CD8-positive, alpha-beta memory T cell (primary cell): ENCODE measurements at regions of chr10 and their contacts with region 1.

Region 1: DNA sequence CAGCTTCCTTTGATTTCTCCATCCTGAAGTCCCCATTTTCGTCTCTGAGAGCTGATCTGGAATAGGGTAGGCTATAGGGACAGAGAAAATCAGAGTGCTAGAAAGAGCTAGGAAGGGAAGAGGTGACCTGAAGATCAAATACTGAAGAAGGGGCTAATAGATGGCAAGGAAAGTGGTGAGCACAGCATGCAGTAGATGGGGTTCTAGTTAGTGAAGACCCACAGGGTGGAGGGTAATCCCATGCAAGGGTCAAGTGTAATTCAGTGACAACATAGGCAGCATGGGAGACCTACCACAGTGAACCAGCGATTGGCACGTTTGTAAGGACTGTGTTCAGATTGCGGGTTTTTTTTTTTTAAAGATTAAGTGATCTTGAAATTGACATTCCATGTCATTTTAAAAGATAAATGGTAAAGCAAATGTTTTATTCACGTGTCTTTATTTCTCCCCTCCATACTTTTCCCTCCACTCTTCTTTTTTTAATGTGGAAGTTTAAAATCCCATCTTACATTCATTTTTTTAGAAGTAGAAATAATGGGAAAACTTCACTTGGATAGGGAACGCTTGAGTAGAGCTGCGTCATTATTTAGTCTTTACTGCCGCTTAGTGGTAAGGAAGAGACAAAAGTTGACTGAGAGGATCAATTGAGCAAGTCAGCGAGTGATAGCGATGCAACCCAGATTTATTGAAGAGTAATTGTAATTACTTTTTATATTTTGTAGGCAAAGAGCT is 21.0 kb upstream of the ABI1 start:
- DNase-seq: peak in 2 of 5 donors; percentile 30 to 48
- H3K4me3 ChIP-seq: no peak overlapping the region
- H3K4me3 Mint-ChIP-seq: no peak overlapping the region
- H3K27ac ChIP-seq: no peak overlapping the region
- H3K27ac Mint-ChIP-seq: no peak overlapping the region
- H3K4me1 ChIP-seq: no peaks in the 10 kb centered on the region
- H3K4me1 Mint-ChIP-seq: peaks cover 0 to 2% (median 0%) of the 10 kb centered on the region in 3 donors
- H3K27me3 ChIP-seq: no peaks in the 10 kb centered on the region
- H3K27me3 Mint-ChIP-seq: peaks cover 4 to 35% of the 10 kb centered on the region in 2 donors

Region 2: DNA sequence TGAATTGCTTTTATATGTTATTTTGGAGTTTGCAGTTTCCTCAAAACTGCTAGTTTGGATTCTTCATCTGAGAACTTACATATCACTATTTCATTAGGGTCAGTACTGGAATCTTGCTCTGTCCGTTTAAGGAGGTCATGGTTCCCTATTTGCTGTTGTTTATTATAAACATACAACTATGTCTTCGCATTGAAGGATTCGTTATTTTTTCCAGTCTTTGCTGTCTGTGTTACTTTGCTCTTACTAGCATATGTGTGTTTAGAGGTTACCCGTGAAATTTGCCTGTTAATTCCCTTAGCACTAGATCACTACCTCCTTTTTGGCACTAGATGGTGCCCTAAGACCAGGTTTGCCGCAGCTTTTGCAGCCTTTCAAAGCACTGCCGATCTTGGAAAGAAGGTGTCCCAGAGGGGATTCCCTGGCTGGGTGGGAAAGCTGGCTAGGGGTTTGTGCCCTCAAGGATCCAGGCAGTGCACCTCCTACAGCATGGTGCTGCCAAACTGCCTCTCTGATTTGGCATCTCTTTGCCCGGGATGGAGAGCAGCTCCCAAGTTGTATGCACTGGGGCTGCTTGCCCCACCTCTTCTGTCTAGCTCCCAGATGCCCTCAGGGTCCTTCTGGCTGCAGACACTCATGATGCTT is 546.7 kb before region 1 on chr10:
- CTCF ChIA-PET with region 1: interaction called, 10 read pairs
- POLR2A ChIA-PET with region 1: no interaction called
- DNase-seq: peak; percentile 41 to 76 (median 60)
- H3K4me3 ChIP-seq: peak overlapping the region; percentile 62
- H3K4me3 Mint-ChIP-seq: peak overlapping the region; percentile 73 to 87 (median 82)
- H3K27ac ChIP-seq: no peak overlapping the region
- H3K27ac Mint-ChIP-seq: peak overlapping the region in 5 of 8 donors; percentile 7 to 79 (median 62)
- H3K4me1 ChIP-seq: no peaks in the 10 kb centered on the region
- H3K4me1 Mint-ChIP-seq: peaks cover 0 to 9% (median 5%) of the 10 kb centered on the region in 3 donors
- H3K27me3 ChIP-seq: no peaks in the 10 kb centered on the region
- H3K27me3 Mint-ChIP-seq: peaks cover 0 to 3% of the 10 kb centered on the region in 2 donors

Region 3: DNA sequence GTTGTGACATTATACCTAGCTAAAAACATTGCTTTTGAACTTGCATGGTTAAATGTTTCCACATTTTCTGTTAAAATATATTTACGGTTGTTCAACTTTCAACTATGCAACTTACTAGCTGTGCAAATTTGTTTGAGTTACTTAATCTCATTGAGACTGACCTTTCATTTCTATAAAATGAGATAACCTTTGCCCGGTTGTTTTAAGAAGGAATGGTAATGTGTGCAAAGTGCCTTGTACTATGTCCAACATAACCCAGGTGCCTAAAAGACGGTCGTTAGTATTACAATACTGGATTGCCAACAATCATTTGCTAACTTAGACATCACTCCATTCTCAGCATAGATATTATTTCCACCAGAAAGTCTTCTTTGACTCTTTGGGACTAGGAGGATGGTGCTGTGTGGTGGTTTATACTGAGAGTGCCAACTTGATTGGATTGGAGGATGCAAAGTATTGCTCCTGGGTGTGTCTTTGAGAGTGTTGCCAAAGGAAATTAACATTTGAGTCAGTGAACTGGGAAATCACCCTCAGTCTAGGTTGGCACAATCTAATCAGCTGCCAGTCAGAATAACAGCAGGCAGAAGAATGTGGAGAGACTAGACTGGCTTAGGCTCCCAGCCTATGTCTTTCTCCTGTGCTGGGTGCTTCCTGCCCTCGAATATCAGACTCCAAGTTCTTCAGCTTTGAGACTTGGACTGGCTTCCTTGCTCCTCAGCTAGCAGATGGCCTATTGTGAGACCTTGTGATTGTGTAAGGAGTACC is 269.4 kb before region 1 on chr10:
- CTCF ChIA-PET with region 1: interaction called, 10 read pairs
- POLR2A ChIA-PET with region 1: no interaction called
- DNase-seq: no peak
- H3K4me3 ChIP-seq: no peak overlapping the region
- H3K4me3 Mint-ChIP-seq: no peak overlapping the region
- H3K27ac ChIP-seq: no peak overlapping the region
- H3K27ac Mint-ChIP-seq: no peak overlapping the region
- H3K4me1 ChIP-seq: no peaks in the 10 kb centered on the region
- H3K4me1 Mint-ChIP-seq: no peaks in the 10 kb centered on the region
- H3K27me3 ChIP-seq: no peaks in the 10 kb centered on the region
- H3K27me3 Mint-ChIP-seq: peaks cover 4 to 48% of the 10 kb centered on the region in 2 donors

Region 4: GRCh38 chr10:26685441-26685840 is 196.3 kb before region 1 on chr10:
- CTCF ChIA-PET with region 1: interaction called, 11 read pairs
- POLR2A ChIA-PET with region 1: no interaction called
- DNase-seq: no peak
- H3K4me3 ChIP-seq: no peak overlapping the region
- H3K4me3 Mint-ChIP-seq: no peak overlapping the region
- H3K27ac ChIP-seq: no peak overlapping the region
- H3K27ac Mint-ChIP-seq: no peak overlapping the region
- H3K4me1 ChIP-seq: peaks cover 25% of the 10 kb centered on the region
- H3K4me1 Mint-ChIP-seq: peaks cover 18 to 27% (median 25%) of the 10 kb centered on the region in 3 donors
- H3K27me3 ChIP-seq: no peaks in the 10 kb centered on the region
- H3K27me3 Mint-ChIP-seq: peaks cover 7 to 25% of the 10 kb centered on the region in 2 donors

Region 5: DNA sequence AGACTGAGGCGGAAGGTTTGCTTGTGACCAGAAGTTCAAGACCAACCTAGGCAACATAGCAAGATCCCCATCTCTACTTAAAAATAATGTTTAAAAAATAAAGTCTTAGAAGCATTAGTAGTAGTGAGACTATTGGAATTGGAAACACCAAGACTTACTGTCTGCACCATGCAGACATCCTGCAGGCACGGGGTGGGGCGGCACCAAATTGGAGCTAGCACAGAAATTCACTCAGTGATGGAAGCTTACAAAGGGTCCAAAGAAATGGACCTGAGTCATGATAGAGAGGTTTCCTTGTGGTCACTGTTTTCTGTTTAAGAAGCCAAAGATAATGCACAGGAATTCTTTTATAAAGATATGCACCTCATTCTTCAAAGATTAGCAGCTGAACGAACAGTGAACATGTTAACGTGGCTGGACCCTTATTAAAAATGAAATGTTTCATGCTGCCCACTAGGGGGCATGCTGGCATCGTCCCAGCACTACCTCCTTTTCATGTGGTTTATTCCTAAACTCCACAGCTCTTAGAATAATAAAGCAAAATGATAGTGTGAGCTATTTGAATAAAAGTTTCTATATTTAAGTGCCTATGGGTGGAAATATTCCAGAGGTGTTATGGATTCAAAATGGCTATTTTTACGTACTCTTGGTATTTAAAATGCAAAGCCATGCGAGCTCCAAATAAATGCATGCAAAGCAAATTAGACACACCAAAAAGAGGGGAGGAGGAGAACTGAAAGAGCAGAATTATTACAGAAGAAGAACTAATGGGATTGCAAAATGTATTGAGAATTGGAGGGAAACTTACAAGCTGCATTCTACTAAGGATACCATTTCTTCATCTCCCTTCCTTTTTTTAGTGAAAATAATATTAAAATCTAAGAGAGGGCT is 155.7 kb before region 1 on chr10:
- CTCF ChIA-PET with region 1: interaction called, 75 read pairs
- POLR2A ChIA-PET with region 1: interaction called, 4 read pairs
- DNase-seq: peak; percentile 21 to 57 (median 38)
- H3K4me3 ChIP-seq: no peak overlapping the region
- H3K4me3 Mint-ChIP-seq: no peak overlapping the region
- H3K27ac ChIP-seq: no peak overlapping the region
- H3K27ac Mint-ChIP-seq: peak overlapping the region in 4 of 8 donors; percentile 12 to 66 (median 55)
- H3K4me1 ChIP-seq: peaks cover 10% of the 10 kb centered on the region
- H3K4me1 Mint-ChIP-seq: peaks cover 12 to 17% (median 16%) of the 10 kb centered on the region in 3 donors
- H3K27me3 ChIP-seq: no peaks in the 10 kb centered on the region
- H3K27me3 Mint-ChIP-seq: no peaks in the 10 kb centered on the region

Region 6: DNA sequence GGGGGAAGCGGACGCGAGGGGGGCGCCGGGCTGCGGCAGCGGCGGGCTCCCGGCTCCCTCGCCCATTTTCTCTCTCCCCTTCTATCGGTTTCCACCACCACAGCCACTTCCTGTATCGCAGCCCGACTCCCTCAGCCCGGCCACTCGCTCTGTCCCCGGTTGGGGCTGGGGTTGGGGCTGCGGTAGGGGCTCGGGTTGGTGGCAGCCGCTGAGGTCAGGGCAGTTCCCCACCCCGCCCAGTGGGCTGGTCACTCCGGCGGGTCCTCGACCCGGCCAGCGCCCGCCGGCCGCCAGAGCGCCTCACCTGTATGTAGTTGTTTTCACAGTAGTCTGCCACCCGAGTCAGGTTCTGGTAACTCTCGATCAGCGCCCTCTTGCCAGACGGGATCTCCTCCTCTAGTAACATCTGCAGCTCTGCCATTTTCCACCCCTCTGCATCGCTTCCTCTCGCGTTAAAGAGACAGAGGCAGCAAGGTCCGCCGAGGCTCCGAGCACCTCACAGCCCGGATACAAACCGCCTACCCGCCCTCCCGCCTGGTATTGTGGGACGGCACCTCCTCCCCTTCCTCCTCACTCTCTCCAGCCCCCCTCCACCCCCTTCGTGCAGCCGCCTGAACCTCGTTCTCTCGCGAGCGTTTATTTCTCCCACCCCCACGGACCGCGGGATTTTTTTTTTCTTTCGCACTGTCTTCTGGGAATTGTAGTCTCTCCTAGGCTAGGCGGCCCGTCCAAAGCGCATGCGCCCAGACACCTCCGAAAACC is 21.1 kb before region 1 on chr10 and contains the start of gene ABI1:
- CTCF ChIA-PET with region 1: interaction called, 18 read pairs
- POLR2A ChIA-PET with region 1: no interaction called
- DNase-seq: peak; percentile 96 to 99 (median 98)
- H3K4me3 ChIP-seq: peak within 1 kb of the TSS; percentile 97
- H3K4me3 Mint-ChIP-seq: peak within 1 kb of the TSS; percentile 94 to 100 (median 98)
- H3K27ac ChIP-seq: peak within 1 kb of the TSS; percentile 95
- H3K27ac Mint-ChIP-seq: peak within 1 kb of the TSS; percentile 91 to 99 (median 98)
- H3K4me1 ChIP-seq: peaks cover 34% of the 10 kb centered on the region
- H3K4me1 Mint-ChIP-seq: peaks cover 30 to 46% (median 43%) of the 10 kb centered on the region in 3 donors
- H3K27me3 ChIP-seq: peaks cover 4% of the 10 kb centered on the region
- H3K27me3 Mint-ChIP-seq: peaks cover 3 to 18% of the 10 kb centered on the region in 2 donors
- total RNA-seq, gene ABI1: 35.9 to 37.1 TPM

Region 7: GRCh38 chr10:27373566-27374160 is 491.9 kb after region 1 on chr10:
- CTCF ChIA-PET with region 1: no interaction called
- POLR2A ChIA-PET with region 1: no interaction called
- DNase-seq: no peak
- H3K4me3 ChIP-seq: no peak overlapping the region
- H3K4me3 Mint-ChIP-seq: no peak overlapping the region
- H3K27ac ChIP-seq: no peak overlapping the region
- H3K27ac Mint-ChIP-seq: peak overlapping the region in 1 of 8 donors; percentile 22
- H3K4me1 ChIP-seq: no peaks in the 10 kb centered on the region
- H3K4me1 Mint-ChIP-seq: no peaks in the 10 kb centered on the region
- H3K27me3 ChIP-seq: no peaks in the 10 kb centered on the region
- H3K27me3 Mint-ChIP-seq: peaks cover 6 to 17% of the 10 kb centered on the region in 2 donors